ENCODE measurements at regions of chr10 and their contacts with region 1.

Region 1: GRCh38 chr10:69439813-69440506 is 11.3 kb upstream of the TSPAN15 start:
- DNase-seq: peak; percentile 81
- H3K4me3 Mint-ChIP-seq: peak overlapping the region; percentile 64
- H3K27ac Mint-ChIP-seq: peak overlapping the region; percentile 87
- H3K4me1 Mint-ChIP-seq: peaks cover 37% of the 10 kb centered on the region
- H3K27me3 Mint-ChIP-seq: no peaks in the 10 kb centered on the region
- CTCF ChIP-seq: no peak

Region 2: GRCh38 chr10:68955832-68956532 is 484.0 kb before region 1 on chr10 and contains the start of gene DDX21:
- CTCF ChIA-PET with region 1: no interaction called
- POLR2A ChIA-PET with region 1: no interaction called
- intact Hi-C with region 1: no loop called
- DNase-seq: peak; percentile 93
- H3K4me3 Mint-ChIP-seq: peak within 1 kb of the TSS; percentile 100
- H3K27ac Mint-ChIP-seq: peak within 1 kb of the TSS; percentile 100
- H3K4me1 Mint-ChIP-seq: peaks cover 8% of the 10 kb centered on the region
- H3K27me3 Mint-ChIP-seq: no peaks in the 10 kb centered on the region
- CTCF ChIP-seq: peak; percentile 41
- total RNA-seq, gene DDX21: 144 and 216 TPM in 2 replicates

Region 3: DNA sequence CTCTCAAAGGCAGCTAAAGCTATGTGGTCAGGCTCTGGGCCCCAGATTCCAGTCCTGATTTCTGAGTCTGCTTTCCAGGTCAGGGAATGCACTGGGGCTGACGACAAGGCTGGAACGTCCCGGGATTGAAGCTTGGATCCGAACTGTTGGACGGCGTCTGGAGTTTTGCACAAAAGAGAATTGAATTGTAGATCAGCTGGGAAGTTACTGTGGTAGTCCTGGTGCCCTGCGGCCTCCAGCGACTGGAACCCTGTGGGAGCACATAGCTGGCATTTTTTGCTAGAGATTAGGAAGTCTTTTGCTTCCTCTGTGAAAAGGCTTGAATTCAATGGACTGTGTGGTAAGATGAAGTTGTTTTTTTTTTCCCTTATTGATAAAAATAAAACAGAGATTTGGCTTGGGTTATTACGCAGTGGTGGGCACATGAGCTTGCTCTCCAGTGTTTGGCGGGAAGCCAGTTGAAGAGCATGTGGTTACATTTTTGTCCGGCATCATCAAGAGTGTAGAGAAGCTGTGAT is 161.5 kb before region 1 on chr10 and contains the start of gene HK1:
- CTCF ChIA-PET with region 1: no interaction called
- POLR2A ChIA-PET with region 1: no interaction called
- intact Hi-C with region 1: no loop called
- DNase-seq: no peak
- H3K4me3 Mint-ChIP-seq: no peak within 1 kb of the TSS
- H3K27ac Mint-ChIP-seq: no peak within 1 kb of the TSS
- H3K4me1 Mint-ChIP-seq: no peaks in the 10 kb centered on the region
- H3K27me3 Mint-ChIP-seq: no peaks in the 10 kb centered on the region
- CTCF ChIP-seq: no peak
- total RNA-seq, gene HK1: 126 and 134 TPM in 2 replicates

Region 4: GRCh38 chr10:69425511-69426298 is 14.3 kb before region 1 on chr10:
- CTCF ChIA-PET with region 1: interaction called, 6 read pairs
- POLR2A ChIA-PET with region 1: interaction called, 11 read pairs
- intact Hi-C with region 1: no loop called
- DNase-seq: no peak
- H3K4me3 Mint-ChIP-seq: no peak overlapping the region
- H3K27ac Mint-ChIP-seq: no peak overlapping the region
- H3K4me1 Mint-ChIP-seq: peaks cover 12% of the 10 kb centered on the region
- H3K27me3 Mint-ChIP-seq: no peaks in the 10 kb centered on the region
- CTCF ChIP-seq: no peak

Region 5: DNA sequence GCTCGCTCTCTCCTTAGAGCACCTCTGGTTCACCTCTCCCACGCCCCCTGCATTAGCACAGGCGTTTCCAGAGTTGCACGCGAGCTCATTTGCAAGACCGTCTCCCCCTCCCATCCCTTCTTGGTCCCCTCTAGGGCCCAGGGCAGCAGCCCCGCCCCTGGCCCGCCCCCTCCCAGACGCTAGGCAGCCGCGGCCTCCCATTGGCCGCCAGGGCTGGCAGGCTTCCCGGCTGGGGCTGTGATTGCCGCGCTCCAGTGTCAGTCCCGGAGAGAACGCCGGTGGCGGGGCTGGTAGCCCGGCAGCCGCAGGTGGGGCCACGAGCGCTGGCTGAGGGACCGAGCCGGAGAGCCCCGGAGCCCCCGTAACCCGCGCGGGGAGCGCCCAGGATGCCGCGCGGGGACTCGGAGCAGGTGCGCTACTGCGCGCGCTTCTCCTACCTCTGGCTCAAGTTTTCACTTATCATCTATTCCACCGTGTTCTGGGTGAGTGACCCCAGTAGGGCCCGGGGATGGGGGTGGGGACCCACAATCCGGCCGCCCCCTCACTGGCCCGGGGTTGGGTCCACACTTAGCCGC is 11.3 kb after region 1 on chr10 and contains the start of gene TSPAN15:
- CTCF ChIA-PET with region 1: interaction called, 5 read pairs
- POLR2A ChIA-PET with region 1: interaction called, 27 read pairs
- intact Hi-C with region 1: no loop called
- DNase-seq: peak; percentile 67
- H3K4me3 Mint-ChIP-seq: peak within 1 kb of the TSS; percentile 72
- H3K27ac Mint-ChIP-seq: no peak within 1 kb of the TSS
- H3K4me1 Mint-ChIP-seq: peaks cover 31% of the 10 kb centered on the region
- H3K27me3 Mint-ChIP-seq: no peaks in the 10 kb centered on the region
- CTCF ChIP-seq: no peak
- total RNA-seq, gene TSPAN15: 0.52 and 0.54 TPM in 2 replicates